Endothelial cell of umbilical vein (primary cell): ENCODE measurements at regions of chr1 and their contacts with region 1.

Region 1: DNA sequence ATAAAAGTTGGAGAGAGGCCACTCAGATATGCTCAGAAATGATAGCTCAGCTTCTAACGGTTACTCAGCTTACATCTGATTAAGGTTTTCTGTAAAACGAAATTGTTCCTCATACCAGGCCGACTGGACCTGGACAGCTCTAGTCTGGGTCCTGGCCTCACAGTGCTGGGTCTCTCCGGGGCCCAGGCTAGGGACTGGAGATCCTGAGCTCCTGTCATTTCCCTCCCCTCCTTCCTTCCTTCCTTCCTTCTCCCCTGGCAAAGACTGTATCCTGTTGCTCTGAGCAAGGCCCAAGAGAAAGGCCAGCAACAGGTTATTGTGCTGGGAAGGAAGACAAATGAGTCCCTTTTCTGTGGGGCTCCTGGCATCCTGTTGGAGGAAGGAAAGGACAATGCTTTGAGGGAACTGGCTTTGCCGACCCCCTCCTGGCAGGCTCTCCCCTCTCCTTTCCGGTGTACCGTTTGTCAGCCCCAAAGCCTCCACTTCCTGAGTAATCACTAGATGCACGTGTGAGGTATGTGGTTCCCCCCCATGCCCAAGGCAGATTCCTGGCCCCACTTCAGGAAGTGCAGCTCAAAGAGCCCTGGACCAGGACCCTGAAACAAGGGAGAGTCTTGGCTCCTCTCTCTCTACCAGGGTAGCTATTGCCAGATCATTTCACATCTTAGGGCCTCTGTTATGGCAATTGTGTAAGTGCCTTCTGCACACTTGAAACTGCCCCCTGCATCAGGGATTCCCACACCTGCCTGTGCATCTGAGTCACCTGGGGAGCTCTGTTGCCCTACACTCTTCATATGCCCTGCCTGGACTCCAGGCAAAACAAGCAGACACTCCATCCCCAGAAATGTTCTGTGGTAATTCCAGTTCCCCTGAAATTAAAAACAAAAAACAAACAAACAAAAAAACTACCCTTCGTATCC is 212.7 kb upstream of the FGGY start:
- DNase-seq: peak; percentile 67
- H3K4me3 ChIP-seq: no peak overlapping the region
- H3K27ac ChIP-seq: peak overlapping the region; percentile 49
- H3K4me1 ChIP-seq: peaks cover 23% of the 10 kb centered on the region
- H3K27me3 ChIP-seq: no peaks in the 10 kb centered on the region
- CTCF ChIP-seq: no peak
- POLR2A ChIP-seq: peak; percentile 20

Region 2: DNA sequence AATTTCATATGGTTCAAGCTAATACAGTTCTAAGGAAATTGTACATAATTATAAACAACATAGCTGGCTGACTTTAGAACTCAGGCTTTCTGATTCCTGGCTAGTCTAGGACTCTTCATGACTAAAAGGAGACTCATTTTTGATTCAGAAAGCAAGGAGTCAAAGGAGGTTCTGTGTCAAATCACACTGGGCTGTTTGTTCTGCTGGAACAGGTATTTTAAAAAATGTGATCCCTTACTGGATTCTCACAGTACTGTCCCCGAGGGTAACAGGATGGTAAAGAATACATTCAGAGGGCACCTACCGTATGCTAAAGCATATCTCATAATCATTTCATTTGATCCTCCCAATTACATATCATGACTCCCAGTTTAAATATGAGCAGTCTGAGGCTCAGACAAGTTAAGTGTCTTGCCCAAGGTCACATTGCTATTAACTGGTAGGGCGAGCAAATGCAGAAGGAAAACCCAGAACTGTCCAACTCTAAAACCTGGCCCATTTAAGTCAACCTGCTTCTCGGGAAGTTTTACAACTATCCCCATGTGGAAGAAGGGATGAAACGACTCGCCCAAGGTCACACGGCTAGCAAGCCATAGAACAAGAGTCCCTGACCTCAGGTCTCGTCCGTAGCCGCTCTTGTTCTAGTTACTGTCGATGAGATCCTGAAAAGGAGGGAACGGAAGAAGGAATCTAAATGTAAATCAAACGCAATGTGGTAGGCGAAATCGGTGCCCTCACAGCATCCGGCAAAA is 385.0 kb before region 1 on chr1:
- CTCF ChIA-PET with region 1: no interaction called
- POLR2A ChIA-PET with region 1: no interaction called
- dilution Hi-C with region 1: no loop called
- intact Hi-C with region 1: no loop called
- DNase-seq: peak; percentile 63
- H3K4me3 ChIP-seq: peak overlapping the region; percentile 75 to 92 (median 86)
- H3K27ac ChIP-seq: peak overlapping the region; percentile 89
- H3K4me1 ChIP-seq: peaks cover 8% of the 10 kb centered on the region
- H3K27me3 ChIP-seq: no peaks in the 10 kb centered on the region
- CTCF ChIP-seq: no peak
- POLR2A ChIP-seq: peak; percentile 5

Region 3: DNA sequence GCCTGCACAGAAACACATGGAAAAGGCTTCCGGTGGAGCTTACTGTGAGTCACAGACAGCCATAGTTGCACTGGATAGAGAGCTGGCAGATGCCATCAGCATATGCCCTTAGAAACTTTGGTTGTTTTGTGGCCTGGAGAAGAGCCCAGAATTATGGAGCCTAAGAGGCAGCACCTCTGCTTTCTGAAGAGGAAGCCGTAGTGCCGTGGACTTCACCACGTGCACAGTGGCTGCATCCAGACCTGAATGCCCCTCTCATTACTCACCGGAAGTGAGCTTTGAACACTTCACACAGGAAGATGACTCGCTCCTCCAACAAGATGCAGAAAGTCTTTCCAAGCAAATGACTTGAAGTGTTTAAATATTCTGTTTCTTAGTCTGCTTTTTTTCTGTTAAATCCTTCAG is 328.7 kb before region 1 on chr1:
- CTCF ChIA-PET with region 1: no interaction called
- POLR2A ChIA-PET with region 1: no interaction called
- dilution Hi-C with region 1: no loop called
- intact Hi-C with region 1: loop called (anchors 1 kb)
- DNase-seq: peak; percentile 99
- H3K4me3 ChIP-seq: peak overlapping the region in 1 of 3 experiments; percentile 18
- H3K27ac ChIP-seq: peak overlapping the region; percentile 96
- H3K4me1 ChIP-seq: peaks cover 40% of the 10 kb centered on the region
- H3K27me3 ChIP-seq: no peaks in the 10 kb centered on the region
- CTCF ChIP-seq: no peak
- POLR2A ChIP-seq: no peak

Region 4: DNA sequence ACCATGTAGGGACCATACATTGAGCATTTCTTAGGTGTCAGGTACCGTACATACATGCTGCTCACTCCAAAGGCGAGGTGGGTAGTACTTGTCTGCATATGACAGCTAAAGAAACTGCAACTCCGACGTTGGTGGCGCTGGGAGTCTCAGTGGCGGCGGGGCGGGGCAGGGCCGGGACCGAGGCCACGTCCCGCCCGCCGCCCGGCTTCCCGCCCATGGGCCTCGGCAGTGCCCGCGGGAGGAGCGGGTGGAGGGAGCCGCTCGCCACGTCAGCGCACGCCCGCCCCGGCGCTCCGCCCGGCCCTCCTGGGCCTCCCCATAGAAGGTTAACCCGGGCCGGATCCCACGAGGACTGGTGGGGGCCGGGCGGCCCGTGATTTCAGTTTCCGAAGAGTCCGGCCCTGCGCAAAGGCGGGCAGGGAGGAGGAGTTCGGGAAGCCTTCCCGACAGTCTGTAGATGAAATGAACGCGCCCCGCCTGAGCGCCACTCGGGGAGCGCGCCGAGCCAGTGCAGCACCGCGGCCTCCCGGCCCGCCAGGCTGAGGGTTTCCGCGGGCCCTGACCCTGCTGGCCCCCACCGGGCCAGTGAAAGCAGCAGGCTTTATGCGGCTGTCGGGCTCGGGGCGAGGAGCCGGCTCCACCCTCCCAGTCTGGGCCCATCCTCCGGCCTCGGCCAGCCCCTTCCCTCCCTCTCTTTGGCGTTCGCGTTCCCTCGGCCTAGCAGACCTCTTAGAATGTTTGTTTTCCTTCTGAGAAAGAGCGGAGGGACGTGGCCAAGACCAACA is 180.5 kb before region 1 on chr1:
- CTCF ChIA-PET with region 1: no interaction called
- POLR2A ChIA-PET with region 1: no interaction called
- dilution Hi-C with region 1: no loop called
- intact Hi-C with region 1: loop called (anchors 1 kb)
- DNase-seq: peak; percentile 94
- H3K4me3 ChIP-seq: peak overlapping the region in 2 of 3 experiments; percentile 24 to 41
- H3K27ac ChIP-seq: peak overlapping the region; percentile 64
- H3K4me1 ChIP-seq: peaks cover 46% of the 10 kb centered on the region
- H3K27me3 ChIP-seq: no peaks in the 10 kb centered on the region
- CTCF ChIP-seq: no peak
- POLR2A ChIP-seq: peak; percentile 95

Region 5: DNA sequence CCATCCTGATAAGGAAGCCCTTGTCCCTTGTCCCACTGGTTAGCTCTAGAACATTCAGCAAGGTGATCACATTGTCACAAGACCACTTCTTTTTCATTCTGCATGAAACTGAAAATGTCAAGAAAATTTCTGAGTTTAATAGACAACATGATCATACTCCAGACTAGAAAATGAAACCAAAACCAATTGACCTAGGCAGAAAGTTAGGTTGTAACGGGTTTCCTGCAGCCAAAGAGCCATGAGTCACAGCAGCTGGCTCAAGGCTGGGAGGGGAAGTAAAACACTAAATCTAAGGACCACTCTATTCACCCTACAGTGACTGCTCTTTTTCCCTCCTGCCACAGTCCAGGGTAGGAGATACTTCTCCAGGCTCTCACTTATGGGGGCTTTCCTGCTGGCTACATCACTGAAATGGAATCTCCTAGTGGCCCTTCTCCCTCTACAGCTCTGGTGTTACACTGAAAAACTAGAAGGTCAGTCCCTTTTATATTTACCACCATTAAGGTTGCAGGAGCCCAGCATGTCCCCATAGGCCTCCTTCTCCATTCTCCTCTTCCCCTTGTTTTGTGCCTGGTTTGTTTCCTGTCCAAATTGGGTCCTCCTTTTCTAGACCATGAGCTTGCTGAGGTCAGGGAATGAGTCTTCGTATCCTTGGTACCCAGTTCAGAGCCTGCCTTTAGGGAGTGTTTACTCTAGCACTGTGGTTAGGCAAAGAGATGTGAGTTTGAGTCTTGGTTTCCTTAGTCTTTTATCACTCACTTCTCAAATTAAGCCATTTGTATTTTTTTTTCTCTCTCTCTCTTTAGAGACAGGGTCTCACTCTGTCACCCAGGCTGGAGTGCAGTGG is 63.8 kb before region 1 on chr1:
- CTCF ChIA-PET with region 1: interaction called, 3 read pairs
- POLR2A ChIA-PET with region 1: no interaction called
- dilution Hi-C with region 1: no loop called
- intact Hi-C with region 1: loop called (anchors 1 kb)
- DNase-seq: peak; percentile 87
- H3K4me3 ChIP-seq: peak overlapping the region in 1 of 3 experiments; percentile 56
- H3K27ac ChIP-seq: peak overlapping the region; percentile 65
- H3K4me1 ChIP-seq: peaks cover 31% of the 10 kb centered on the region
- H3K27me3 ChIP-seq: no peaks in the 10 kb centered on the region
- CTCF ChIP-seq: no peak
- POLR2A ChIP-seq: no peak

Region 6: DNA sequence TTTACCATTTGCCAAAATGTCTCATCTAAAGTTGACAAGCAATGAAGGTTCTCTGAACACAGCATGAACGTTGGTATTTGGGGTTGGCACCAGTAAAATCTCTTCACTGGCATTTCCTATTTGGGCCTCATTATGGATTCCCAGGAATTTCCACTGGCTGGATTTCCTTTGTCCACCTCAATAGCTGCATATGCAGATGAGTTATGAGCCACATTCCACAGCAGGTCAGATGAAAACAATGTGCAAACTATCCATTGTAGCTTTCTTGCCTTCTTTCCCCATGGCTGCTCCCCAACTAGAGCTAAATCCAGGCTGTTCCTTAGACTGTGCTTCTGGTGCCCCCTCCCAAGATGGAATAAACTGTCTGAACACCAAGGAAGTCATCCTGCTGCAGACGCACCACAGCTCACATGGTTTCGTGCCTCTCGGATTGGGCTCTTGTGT is 44.6 kb after region 1 on chr1:
- CTCF ChIA-PET with region 1: interaction called, 4 read pairs
- POLR2A ChIA-PET with region 1: no interaction called
- dilution Hi-C with region 1: no loop called
- intact Hi-C with region 1: loop called (anchors 1 kb)
- DNase-seq: peak; percentile 77
- H3K4me3 ChIP-seq: no peak overlapping the region
- H3K27ac ChIP-seq: peak overlapping the region; percentile 87
- H3K4me1 ChIP-seq: peaks cover 32% of the 10 kb centered on the region
- H3K27me3 ChIP-seq: no peaks in the 10 kb centered on the region
- CTCF ChIP-seq: no peak
- POLR2A ChIP-seq: peak; percentile 33

Region 7: GRCh38 chr1:59596441-59596861 is 512.2 kb after region 1 on chr1:
- CTCF ChIA-PET with region 1: no interaction called
- POLR2A ChIA-PET with region 1: no interaction called
- dilution Hi-C with region 1: no loop called
- intact Hi-C with region 1: loop called (anchors 5 kb)
- DNase-seq: peak; percentile 98
- H3K4me3 ChIP-seq: no peak overlapping the region
- H3K27ac ChIP-seq: peak overlapping the region; percentile 83
- H3K4me1 ChIP-seq: peaks cover 29% of the 10 kb centered on the region
- H3K27me3 ChIP-seq: no peaks in the 10 kb centered on the region
- CTCF ChIP-seq: no peak
- POLR2A ChIP-seq: no peak